Mammary epithelial cell (primary cell): ENCODE measurements at regions of chr10 and their contacts with region 1.

Region 1: DNA sequence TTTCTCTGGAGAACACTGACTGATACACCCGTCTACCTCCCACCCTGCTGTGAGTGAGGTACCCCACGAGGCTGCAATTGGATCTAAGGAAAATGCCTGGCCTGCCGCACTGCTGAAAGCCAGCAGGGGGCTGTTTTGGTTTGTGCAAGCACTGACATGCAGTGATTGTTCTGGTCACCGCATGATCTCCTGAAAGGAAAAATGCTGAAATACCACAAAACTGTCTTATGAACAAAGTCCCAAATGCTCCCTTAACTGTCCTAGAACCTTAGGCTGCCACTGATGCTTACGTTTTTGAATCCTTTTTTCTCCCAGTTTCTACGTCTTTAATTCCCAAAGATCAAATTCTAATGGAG is 132.7 kb downstream of the JCAD start:
- DNase-seq: peak; percentile 54
- H3K4me3 ChIP-seq: no peak overlapping the region
- H3K27ac ChIP-seq: no peak overlapping the region
- H3K4me1 ChIP-seq: peaks cover 19% of the 10 kb centered on the region
- H3K27me3 ChIP-seq: no peaks in the 10 kb centered on the region
- CTCF ChIP-seq: peak; percentile 87 to 91

Region 2: GRCh38 chr10:29862926-29863614 is 63.6 kb before region 1 on chr10:
- CTCF ChIA-PET with region 1: no interaction called
- dilution Hi-C with region 1: no loop called
- in situ Hi-C with region 1: no loop called
- intact Hi-C with region 1: no loop called
- DNase-seq: peak; percentile 97
- H3K4me3 ChIP-seq: no peak overlapping the region
- H3K27ac ChIP-seq: peak overlapping the region; percentile 70
- H3K4me1 ChIP-seq: peaks cover 52% of the 10 kb centered on the region
- H3K27me3 ChIP-seq: no peaks in the 10 kb centered on the region
- CTCF ChIP-seq: no peak

Region 3: GRCh38 chr10:29946953-29947700 is 20.5 kb after region 1 on chr10:
- CTCF ChIA-PET with region 1: no interaction called
- dilution Hi-C with region 1: no loop called
- in situ Hi-C with region 1: no loop called
- intact Hi-C with region 1: loop called (anchors 2 kb)
- DNase-seq: peak; percentile 88
- H3K4me3 ChIP-seq: no peak overlapping the region
- H3K27ac ChIP-seq: peak overlapping the region; percentile 97
- H3K4me1 ChIP-seq: peaks cover 50% of the 10 kb centered on the region
- H3K27me3 ChIP-seq: no peaks in the 10 kb centered on the region
- CTCF ChIP-seq: no peak

Region 4: DNA sequence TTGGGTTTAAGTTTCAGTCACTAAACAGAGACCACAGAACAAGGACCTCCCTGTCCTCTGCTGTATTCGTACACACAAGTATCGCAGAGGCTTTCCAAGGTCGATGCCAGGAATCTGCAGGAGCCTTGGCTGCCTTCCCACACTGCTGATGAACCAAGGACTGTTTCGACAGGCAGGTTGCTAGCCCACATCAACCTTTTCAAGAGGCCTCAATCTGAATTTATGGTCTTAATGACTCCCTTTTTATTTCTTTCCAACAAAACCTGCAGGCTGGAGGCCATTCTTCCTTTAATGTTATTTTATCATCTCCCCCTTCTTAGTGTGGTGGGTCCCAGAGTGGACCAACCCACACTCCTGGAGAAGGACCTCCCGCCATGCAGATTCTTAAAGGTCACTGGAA is 87.1 kb after region 1 on chr10:
- CTCF ChIA-PET with region 1: no interaction called
- dilution Hi-C with region 1: loop called (anchors 5 kb)
- in situ Hi-C with region 1: no loop called
- intact Hi-C with region 1: no loop called
- DNase-seq: no peak
- H3K4me3 ChIP-seq: no peak overlapping the region
- H3K27ac ChIP-seq: no peak overlapping the region
- H3K4me1 ChIP-seq: no peaks in the 10 kb centered on the region
- H3K27me3 ChIP-seq: peaks cover 8% of the 10 kb centered on the region
- CTCF ChIP-seq: no peak

Region 5: DNA sequence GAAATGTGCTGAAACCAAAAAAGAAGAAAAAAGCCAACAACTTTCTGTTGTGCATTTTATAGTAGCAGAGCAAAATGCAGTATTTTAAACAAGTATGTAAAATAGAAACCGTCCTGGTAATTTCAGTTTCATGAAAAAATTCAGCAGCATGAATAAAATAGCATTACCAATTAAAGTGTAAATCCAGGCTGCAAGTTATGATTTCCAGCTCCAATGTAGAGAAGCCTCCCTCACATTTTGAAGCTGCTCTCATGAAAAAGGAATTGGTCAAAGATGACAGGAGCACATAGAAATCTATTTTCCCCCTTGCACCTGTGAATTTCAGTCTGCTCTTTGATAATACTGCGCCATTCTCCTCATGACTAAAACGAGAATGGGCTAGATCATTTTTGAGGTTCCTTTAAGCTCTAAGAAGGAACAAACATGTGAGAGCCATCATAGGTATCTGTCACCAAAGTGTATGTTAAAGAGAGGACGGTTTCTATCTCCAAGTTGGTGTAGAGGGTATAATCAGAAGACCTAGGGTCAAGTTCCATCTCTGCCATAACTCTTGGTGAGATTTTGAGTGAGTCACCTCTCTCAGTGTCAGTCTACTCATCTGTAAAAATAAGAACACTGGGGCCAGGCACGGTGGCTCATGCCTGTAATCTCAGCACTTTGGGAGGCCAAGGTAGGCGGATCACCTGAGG is 314.9 kb after region 1 on chr10:
- CTCF ChIA-PET with region 1: no interaction called
- dilution Hi-C with region 1: no loop called
- in situ Hi-C with region 1: no loop called
- intact Hi-C with region 1: loop called (anchors 1 kb)
- DNase-seq: no peak
- H3K4me3 ChIP-seq: no peak overlapping the region
- H3K27ac ChIP-seq: no peak overlapping the region
- H3K4me1 ChIP-seq: no peaks in the 10 kb centered on the region
- H3K27me3 ChIP-seq: no peaks in the 10 kb centered on the region
- CTCF ChIP-seq: no peak